ENCODE measurements at regions of chr5 and their contacts with region 1.

Region 1: GRCh38 chr5:57671371-57671770 is 188.8 kb upstream of the ACTBL2 start:
- DNase-seq: no peak
- ATAC-seq: no peak
- H3K4me3 ChIP-seq: no peak overlapping the region
- H3K4me3 Mint-ChIP-seq: no peak overlapping the region
- H3K27ac ChIP-seq: no peak overlapping the region
- H3K27ac Mint-ChIP-seq: no peak overlapping the region
- H3K4me1 ChIP-seq: no peaks in the 10 kb centered on the region
- H3K4me1 Mint-ChIP-seq: no peaks in the 10 kb centered on the region
- H3K27me3 ChIP-seq: no peaks in the 10 kb centered on the region
- H3K27me3 Mint-ChIP-seq: peaks cover 5% of the 10 kb centered on the region
- CTCF ChIP-seq: no peak

Region 2: GRCh38 chr5:57311921-57312735 is 359.2 kb before region 1 on chr5:
- CTCF ChIA-PET with region 1: no interaction called
- POLR2A ChIA-PET with region 1: no interaction called
- intact Hi-C with region 1: loop called in 1 of 2 experiments (anchors 2 kb)
- DNase-seq: no peak
- ATAC-seq: no peak
- H3K4me3 ChIP-seq: no peak overlapping the region
- H3K4me3 Mint-ChIP-seq: no peak overlapping the region
- H3K27ac ChIP-seq: no peak overlapping the region
- H3K27ac Mint-ChIP-seq: no peak overlapping the region
- H3K4me1 ChIP-seq: no peaks in the 10 kb centered on the region
- H3K4me1 Mint-ChIP-seq: no peaks in the 10 kb centered on the region
- H3K27me3 ChIP-seq: no peaks in the 10 kb centered on the region
- H3K27me3 Mint-ChIP-seq: peaks cover 7% of the 10 kb centered on the region
- CTCF ChIP-seq: no peak

Measured in CD8-positive, alpha-beta T cell (primary cell).